ENCODE measurements at regions of chr1 and their contacts with region 1.

Region 1: DNA sequence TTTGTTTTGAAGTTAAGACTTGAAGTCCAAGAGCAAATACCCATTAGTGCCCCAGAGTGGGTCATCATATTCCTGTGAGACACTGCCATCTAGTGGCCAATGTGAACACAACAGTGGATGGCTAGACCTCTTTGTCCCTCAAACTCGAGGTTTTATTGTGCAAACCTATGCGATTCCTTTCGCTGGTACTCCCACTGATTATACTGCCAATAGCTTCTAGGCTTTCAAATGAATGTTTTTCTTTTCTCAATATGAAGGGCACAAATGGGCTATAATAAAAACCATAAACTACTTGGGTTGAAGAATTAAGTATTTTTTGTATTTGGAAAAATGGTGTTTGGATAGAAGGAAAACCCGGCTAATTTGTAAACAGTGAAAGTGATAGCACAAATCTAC is 100.4 kb upstream of the ZNF281 start:
- DNase-seq: peak; percentile 15 to 71 (median 61)
- ATAC-seq: peak; percentile 86
- H3K4me3 ChIP-seq: no peak overlapping the region
- H3K4me3 Mint-ChIP-seq: no peak overlapping the region
- H3K27ac ChIP-seq: no peak overlapping the region
- H3K27ac Mint-ChIP-seq: no peak overlapping the region
- H3K4me1 ChIP-seq: no peaks in the 10 kb centered on the region
- H3K4me1 Mint-ChIP-seq: peaks cover 0 to 4% (median 0%) of the 10 kb centered on the region in 7 donors
- H3K27me3 ChIP-seq: no peaks in the 10 kb centered on the region
- H3K27me3 Mint-ChIP-seq: peaks cover 0 to 28% (median under 1%) of the 10 kb centered on the region in 5 donors

Region 2: GRCh38 chr1:199684686-199685273 is 825.4 kb before region 1 on chr1:
- CTCF ChIA-PET with region 1: interaction called, 3 read pairs
- POLR2A ChIA-PET with region 1: no interaction called
- intact Hi-C with region 1: loop called (anchors 1 kb)
- DNase-seq: peak in 7 of 9 donors; percentile 7 to 38 (median 28)
- ATAC-seq: peak; percentile 85
- H3K4me3 ChIP-seq: no peak overlapping the region
- H3K4me3 Mint-ChIP-seq: no peak overlapping the region
- H3K27ac ChIP-seq: no peak overlapping the region
- H3K27ac Mint-ChIP-seq: no peak overlapping the region
- H3K4me1 ChIP-seq: no peaks in the 10 kb centered on the region
- H3K4me1 Mint-ChIP-seq: no peaks in the 10 kb centered on the region
- H3K27me3 ChIP-seq: no peaks in the 10 kb centered on the region
- H3K27me3 Mint-ChIP-seq: peaks cover 7 to 33% (median 8%) of the 10 kb centered on the region in 5 donors

Region 3: DNA sequence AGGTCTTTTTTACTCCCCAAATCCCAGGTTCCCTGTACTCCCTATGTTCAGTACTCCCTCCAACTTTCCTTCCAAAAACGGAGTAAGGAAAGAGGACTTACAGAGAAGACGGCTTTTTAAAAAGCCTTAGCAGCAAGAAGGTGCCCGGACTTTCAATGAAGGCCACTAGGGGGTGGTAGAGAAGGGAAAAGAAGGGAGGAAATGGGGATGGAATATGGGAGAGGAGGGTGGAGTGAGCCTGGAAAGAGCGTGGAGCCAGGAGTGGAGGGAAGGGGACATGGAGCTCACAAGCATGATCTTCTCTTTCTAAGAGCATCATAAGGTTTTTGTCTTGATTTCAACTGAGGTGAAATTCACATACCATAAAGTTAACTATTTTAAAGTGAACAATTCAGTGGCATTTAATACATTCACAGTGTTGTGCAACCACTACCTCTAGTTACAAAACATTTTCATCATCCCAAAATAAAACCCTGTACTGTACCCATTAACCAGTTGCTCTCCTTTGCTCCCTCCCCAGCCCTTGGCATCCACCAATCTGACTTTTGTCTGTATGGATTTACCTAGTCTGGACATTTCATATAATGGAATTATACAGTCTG is 230.3 kb before region 1 on chr1:
- CTCF ChIA-PET with region 1: no interaction called
- POLR2A ChIA-PET with region 1: no interaction called
- intact Hi-C with region 1: loop called (anchors 1 kb)
- DNase-seq: peak in 6 of 9 donors; percentile 7 to 31 (median 16)
- ATAC-seq: peak; percentile 40
- H3K4me3 ChIP-seq: no peak overlapping the region
- H3K4me3 Mint-ChIP-seq: no peak overlapping the region
- H3K27ac ChIP-seq: no peak overlapping the region
- H3K27ac Mint-ChIP-seq: no peak overlapping the region
- H3K4me1 ChIP-seq: no peaks in the 10 kb centered on the region
- H3K4me1 Mint-ChIP-seq: peaks cover 0 to 4% (median 0%) of the 10 kb centered on the region in 7 donors
- H3K27me3 ChIP-seq: no peaks in the 10 kb centered on the region
- H3K27me3 Mint-ChIP-seq: peaks cover 0 to 14% (median 0%) of the 10 kb centered on the region in 5 donors

Measured in naive thymus-derived CD4-positive, alpha-beta T cell (primary cell).